OCI-LY7 (cell line): ENCODE measurements at regions of chr9 and their contacts with region 1.

Region 1: GRCh38 chr9:134936346-134937163 is 18.8 kb upstream of the FCN1 start:
- DNase-seq: peak; percentile 85
- H3K4me3 ChIP-seq: peak overlapping the region; percentile 40
- H3K27ac ChIP-seq: peak overlapping the region; percentile 97
- H3K4me1 ChIP-seq: peaks cover 79% of the 10 kb centered on the region
- CTCF ChIP-seq: no peak

Region 2: DNA sequence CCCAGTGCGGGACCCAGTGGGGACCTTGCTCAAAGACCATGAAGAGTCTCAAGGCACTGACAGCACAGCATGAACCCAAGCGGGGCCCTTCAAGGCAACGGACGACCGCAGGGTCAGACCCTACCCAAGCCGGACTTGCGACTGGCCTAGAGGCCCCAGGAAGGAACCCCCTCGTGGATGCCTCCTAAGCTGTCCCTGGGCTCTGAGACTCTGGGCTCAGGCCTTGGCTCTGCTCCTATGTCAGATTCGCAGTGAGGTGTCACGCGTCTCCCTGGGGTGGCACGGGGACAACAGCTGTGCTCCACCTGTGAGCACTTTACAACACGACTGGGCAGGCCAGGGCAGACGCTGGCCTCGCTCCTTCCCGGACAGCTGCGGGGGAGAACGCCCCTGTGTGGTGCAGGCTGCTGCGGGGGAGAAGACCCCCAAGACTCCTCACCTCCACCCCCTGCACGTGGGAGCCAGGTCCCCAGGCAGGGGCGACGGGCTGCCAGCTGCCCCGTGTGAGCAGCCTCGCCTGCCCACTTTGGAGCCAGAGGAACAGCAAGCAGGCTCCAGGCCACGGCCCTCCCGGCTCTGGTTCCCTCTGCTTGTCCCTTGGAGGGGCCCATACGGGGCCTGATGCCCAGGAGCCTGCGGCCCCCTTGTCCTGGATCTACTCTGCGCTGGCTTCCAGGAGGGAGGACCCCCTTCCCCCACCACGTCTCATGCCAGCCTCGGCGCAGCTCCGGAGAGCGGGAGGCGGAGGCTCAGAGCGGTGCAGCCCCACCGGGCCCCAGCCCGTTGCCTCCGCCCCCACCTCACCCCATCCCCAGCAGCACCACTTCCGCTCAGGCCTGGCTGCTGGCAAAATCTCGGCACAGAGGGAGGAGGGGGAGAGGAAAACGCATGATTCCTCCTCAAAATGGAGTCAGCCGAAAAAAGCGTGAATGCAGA is 1234.4 kb before region 1 on chr9:
- CTCF ChIA-PET with region 1: no interaction called
- POLR2A ChIA-PET with region 1: no interaction called
- intact Hi-C with region 1: loop called (anchors 5 kb)
- DNase-seq: peak; percentile 88
- H3K4me3 ChIP-seq: peak overlapping the region; percentile 73
- H3K27ac ChIP-seq: peak overlapping the region; percentile 91
- H3K4me1 ChIP-seq: peaks cover 83% of the 10 kb centered on the region
- CTCF ChIP-seq: no peak

Region 3: GRCh38 chr9:134778841-134779411 is 157.6 kb before region 1 on chr9:
- CTCF ChIA-PET with region 1: no interaction called
- POLR2A ChIA-PET with region 1: no interaction called
- intact Hi-C with region 1: loop called (anchors 1 kb)
- DNase-seq: peak; percentile 62
- H3K4me3 ChIP-seq: no peak overlapping the region
- H3K27ac ChIP-seq: no peak overlapping the region
- H3K4me1 ChIP-seq: peaks cover 17% of the 10 kb centered on the region
- CTCF ChIP-seq: peak; percentile 79